ENCODE measurements at regions of chr17 and their contacts with region 1.

Region 1: DNA sequence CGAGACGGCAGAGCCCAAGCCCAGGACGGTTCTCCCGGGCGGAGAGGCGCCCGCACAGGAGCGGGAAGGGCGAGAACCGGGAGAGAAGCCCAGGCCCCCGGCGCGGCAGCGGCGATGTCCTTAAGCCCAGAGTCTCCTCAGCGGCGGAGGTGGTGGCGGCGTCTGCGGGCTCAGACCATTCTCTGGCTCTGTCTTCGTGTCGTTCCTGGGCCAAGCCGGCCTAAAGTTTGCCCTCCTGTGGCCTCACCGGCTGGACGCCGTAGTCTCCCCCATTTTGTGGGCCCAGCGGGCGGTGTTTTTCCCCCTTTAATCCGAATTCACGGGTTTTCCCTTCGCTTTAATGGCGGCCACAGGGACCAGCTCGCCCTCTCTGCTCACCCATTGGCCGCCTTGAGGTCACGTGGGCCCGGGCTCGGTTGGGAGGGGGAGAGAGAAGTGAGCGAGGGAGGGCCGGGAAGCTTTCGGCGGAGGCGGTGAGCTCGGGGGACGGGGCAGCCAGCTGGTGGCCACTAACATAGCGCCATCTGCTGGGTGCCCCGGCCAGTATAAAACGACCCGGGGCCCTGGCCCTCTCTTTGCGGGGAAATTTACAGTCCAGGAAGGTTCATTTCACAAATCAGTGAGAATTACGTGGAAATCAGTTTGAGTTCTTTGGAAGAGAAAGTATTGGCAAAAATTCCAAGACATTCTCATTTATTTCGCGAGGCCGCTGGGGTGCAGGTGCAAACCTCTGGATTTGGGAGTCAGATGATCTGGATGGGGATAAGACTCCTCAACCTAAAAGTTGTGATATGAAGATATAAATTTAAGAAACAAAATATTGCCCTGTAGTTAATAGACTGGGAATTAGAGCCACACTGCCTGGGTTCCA is 755 bp upstream of the MED13 start:
- DNase-seq: peak; percentile 99

Region 2: DNA sequence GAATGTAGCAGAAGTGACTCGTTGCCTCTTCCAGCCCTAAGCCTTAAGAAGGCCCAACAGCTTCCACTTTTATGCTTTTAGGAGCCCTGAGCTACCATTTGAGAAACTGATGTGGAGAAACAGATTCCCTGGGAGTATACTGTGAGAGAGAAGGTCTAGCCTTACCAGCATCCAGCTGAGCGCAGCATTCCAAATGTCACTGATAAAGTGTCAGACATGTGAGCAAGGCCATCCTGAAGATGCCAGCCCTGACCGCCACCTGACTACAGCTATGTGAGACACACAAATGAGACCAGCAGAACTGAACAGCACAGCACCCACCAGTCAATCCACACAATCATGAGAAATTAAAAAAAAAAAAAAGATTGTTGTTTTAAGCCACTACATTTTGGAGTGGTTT is 17.8 kb after region 1 on chr17:
- CTCF ChIA-PET with region 1: no interaction called
- POLR2A ChIA-PET with region 1: no interaction called
- DNase-seq: no peak

Region 3: DNA sequence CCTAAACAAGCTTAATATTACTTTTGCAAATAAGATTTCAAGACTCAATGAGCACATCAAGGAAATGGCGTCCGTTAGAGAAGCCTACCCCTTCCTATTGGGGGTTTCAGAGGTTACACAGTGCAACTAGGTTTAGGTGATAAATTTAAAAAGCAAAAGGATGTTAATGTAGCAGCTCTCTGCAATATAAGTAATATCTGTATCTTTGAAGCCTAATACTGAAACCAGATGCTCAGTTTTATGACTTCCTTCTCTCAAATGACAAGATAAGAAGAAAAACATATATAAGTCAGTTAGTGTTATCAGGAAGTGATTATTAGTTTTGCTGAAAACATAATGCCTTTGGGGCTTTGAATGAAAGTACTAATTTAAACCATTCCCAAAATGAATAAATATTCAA is 53.5 kb after region 1 on chr17:
- CTCF ChIA-PET with region 1: interaction called, 10 read pairs
- POLR2A ChIA-PET with region 1: no interaction called
- DNase-seq: no peak

Measured in HEK293T (cell line).